HEK293 (cell line): ENCODE measurements at regions of chr17 and their contacts with region 1.

Region 1: DNA sequence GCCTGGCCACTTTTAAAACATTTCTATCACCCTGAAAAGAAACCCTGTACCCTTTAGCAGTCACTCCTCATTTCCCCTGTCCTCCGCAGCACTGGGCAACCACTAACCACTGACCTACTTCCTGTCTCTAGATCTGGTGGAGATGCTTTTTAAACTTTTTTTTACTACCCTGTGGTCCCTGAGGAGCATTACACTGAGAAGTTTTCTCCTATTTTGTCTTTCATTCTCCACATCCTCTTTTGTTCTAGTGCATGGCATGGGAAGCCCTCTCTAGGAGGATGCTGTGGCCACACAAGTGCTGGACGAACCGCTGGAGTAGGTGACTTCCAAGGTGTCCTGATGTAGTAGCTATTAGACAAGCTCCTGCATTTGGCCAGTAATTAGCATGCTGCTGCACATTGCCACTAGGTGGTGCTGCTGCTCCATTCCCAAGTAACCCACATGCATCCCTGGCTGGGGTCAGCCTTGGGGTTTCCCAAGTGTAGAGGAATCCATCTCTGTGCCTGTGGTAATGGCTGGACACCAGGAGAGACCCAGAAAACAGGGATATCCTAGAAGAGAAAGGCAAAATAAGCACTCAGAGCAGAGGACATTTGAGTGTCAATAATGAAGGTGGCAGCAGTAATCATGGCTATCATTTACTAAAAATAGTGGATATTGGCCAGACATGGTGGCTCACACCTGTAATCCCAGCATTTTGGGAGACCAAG is 143.8 kb upstream of the CRHR1 start:
- H3K4me3 ChIP-seq: no peak overlapping the region
- H3K27ac ChIP-seq: no peak overlapping the region
- H3K4me1 ChIP-seq: no peaks in the 10 kb centered on the region
- CTCF ChIP-seq: peak; percentile 89

Region 2: GRCh38 chr17:45628019-45628418 is 12.3 kb before region 1 on chr17:
- CTCF ChIA-PET with region 1: interaction called, 24 read pairs
- POLR2A ChIA-PET with region 1: interaction called, 3 read pairs
- H3K4me3 ChIP-seq: no peak overlapping the region
- H3K27ac ChIP-seq: no peak overlapping the region
- H3K4me1 ChIP-seq: no peaks in the 10 kb centered on the region
- CTCF ChIP-seq: no peak

Region 3: DNA sequence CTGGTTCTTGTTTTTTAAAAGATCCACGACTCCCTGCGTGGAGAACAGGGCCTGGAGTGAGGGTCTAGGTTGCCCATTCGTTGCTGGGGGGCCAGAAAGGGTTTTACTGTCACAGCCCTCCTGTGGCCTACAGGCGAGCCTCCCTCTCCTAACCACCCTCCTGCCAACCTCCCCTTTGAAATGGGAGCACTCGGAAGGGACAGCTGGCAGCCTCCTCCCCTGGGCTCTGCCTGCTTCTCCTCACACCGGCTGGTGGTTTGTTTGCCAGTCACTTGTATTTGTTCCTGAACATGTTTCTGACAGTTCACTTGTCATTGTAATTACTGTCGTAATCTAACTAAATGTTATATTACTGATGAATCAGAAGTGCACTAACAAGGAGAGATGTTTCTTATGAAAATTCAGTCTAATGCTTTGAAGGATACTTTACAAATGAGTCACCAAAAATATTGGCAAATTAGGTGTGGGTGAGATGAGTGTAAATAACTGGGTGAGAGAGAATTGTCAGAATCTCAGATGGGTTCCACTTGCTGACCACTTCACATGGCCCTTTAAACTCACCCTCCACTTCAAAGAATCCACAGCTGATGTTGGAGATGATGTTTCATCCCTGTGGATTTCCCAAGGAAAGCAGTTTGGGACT is 201.7 kb after region 1 on chr17:
- CTCF ChIA-PET with region 1: interaction called, 10 read pairs
- POLR2A ChIA-PET with region 1: no interaction called
- H3K4me3 ChIP-seq: no peak overlapping the region
- H3K27ac ChIP-seq: no peak overlapping the region
- H3K4me1 ChIP-seq: no peaks in the 10 kb centered on the region
- CTCF ChIP-seq: no peak